ENCODE measurements at regions of chr1 and their contacts with region 1.

Region 1: DNA sequence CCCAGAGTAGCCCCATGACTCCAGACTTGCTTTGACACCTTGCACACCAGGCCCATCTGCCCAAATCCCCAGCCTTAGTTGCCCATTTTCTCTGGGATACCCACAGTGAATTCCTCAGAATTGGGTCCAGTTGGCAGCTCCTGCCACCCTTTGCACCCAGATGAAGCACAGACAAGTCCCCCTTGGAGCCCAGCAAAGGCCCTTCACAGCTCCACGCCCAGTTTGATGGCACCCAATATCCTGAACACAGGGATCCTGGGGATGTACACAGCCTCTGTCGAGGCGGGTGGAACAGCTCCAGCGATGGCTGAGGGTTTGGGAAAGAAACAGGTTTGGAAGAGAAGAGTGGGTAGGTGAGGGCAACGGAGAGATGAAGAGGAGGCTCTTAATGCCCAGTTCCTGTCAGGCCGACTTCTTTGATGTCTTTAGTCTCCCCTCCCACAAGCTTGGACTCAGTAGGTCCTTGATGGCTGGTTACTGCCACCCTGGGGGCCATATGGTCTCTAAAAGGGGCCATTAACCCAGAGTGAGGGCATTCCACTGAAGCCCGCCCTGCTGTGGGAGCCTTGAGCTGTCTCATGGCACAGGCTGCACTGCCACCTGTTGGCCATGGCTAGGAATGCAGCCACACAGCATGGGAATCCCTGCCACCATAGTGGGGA is 21.7 kb downstream of the TMEM53 start:
- DNase-seq: no peak
- ATAC-seq: peak; percentile 98
- H3K4me3 ChIP-seq: no peak overlapping the region
- H3K27ac ChIP-seq: no peak overlapping the region
- H3K4me1 ChIP-seq: no peaks in the 10 kb centered on the region
- H3K27me3 ChIP-seq: no peaks in the 10 kb centered on the region
- CTCF ChIP-seq: peak; percentile 97 to 99 (median 98); a peak in 5 of 6 replicates
- EP300 ChIP-seq: no peak
- POLR2A ChIP-seq: no peak; the same call in 1 of the 2 replicates
- RAD21 ChIP-seq: peak; percentile 90

Region 2: GRCh38 chr1:44377925-44378784 is 274.4 kb before region 1 on chr1:
- CTCF ChIA-PET with region 1: interaction called, 12 read pairs
- POLR2A ChIA-PET with region 1: no interaction called
- RAD21 ChIA-PET with region 1: interaction called, 4 read pairs
- SMC1A ChIA-PET with region 1: interaction called, 14 read pairs
- in situ Hi-C with region 1: no loop called
- intact Hi-C with region 1: loop called (anchors 5 kb)
- DNase-seq: no peak
- ATAC-seq: peak; percentile 76
- H3K4me3 ChIP-seq: no peak overlapping the region
- H3K27ac ChIP-seq: no peak overlapping the region
- H3K4me1 ChIP-seq: no peaks in the 10 kb centered on the region
- H3K27me3 ChIP-seq: no peaks in the 10 kb centered on the region; a peak in 1 of 4 replicates
- CTCF ChIP-seq: peak; percentile 61 to 72 (median 64)
- EP300 ChIP-seq: no peak
- POLR2A ChIP-seq: no peak
- RAD21 ChIP-seq: peak; percentile 74

Region 3: GRCh38 chr1:44594871-44595746 is 57.5 kb before region 1 on chr1:
- CTCF ChIA-PET with region 1: interaction called, 37 read pairs
- POLR2A ChIA-PET with region 1: no interaction called
- RAD21 ChIA-PET with region 1: no interaction called
- SMC1A ChIA-PET with region 1: interaction called, 6 read pairs
- in situ Hi-C with region 1: no loop called
- intact Hi-C with region 1: no loop called
- DNase-seq: no peak
- ATAC-seq: peak; percentile 100
- H3K4me3 ChIP-seq: no peak overlapping the region
- H3K27ac ChIP-seq: no peak overlapping the region
- H3K4me1 ChIP-seq: no peaks in the 10 kb centered on the region
- H3K27me3 ChIP-seq: peaks cover 0 to under 1% of the 10 kb centered on the region in 2 experiments; a peak in 1 of 4 replicates
- CTCF ChIP-seq: peak; percentile 93 to 98 (median 96)
- EP300 ChIP-seq: no peak
- POLR2A ChIP-seq: no peak
- RAD21 ChIP-seq: peak; percentile 86

Region 4: DNA sequence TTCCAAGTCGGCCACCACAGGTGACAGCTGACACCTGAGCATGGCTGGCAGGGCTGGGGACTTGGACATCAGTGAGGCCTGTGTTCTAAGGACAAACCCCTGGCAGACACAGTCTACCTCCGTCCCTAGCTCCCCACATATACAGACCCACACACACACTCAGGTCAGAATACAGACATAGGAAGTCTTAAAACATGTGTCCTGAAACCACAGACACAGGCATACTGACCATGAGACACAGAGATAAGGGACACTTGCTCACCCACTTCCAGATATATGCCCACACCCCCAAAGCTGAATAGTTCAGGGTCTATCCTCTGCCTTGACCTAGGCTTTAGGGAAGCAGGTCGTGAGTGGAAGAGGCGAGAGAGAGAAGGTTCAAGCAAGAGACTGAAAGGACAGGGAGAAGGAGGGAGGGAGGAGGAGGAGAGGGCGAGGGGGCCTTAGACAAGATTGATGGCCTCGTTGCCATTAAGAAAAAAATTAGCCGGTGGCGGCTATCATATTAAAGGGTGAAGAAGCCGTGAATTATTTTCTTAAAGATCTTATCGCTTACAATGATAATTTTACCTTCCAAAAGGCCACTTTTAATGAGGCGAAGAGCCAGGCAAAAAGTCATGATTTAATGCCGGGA is 28.2 kb before region 1 on chr1:
- CTCF ChIA-PET with region 1: interaction called, 22 read pairs
- POLR2A ChIA-PET with region 1: no interaction called
- RAD21 ChIA-PET with region 1: interaction called, 3 read pairs
- SMC1A ChIA-PET with region 1: no interaction called
- in situ Hi-C with region 1: no loop called
- intact Hi-C with region 1: no loop called
- DNase-seq: no peak
- ATAC-seq: no peak; the same call in 2 of the 3 replicates
- H3K4me3 ChIP-seq: no peak overlapping the region
- H3K27ac ChIP-seq: no peak overlapping the region
- H3K4me1 ChIP-seq: no peaks in the 10 kb centered on the region
- H3K27me3 ChIP-seq: no peaks in the 10 kb centered on the region; a peak in 2 of 4 replicates
- CTCF ChIP-seq: no peak
- EP300 ChIP-seq: no peak
- POLR2A ChIP-seq: no peak
- RAD21 ChIP-seq: no peak

Region 5: GRCh38 chr1:44640200-44640853 is 12.2 kb before region 1 on chr1:
- CTCF ChIA-PET with region 1: interaction called, 70 read pairs
- POLR2A ChIA-PET with region 1: interaction called, 4 read pairs
- RAD21 ChIA-PET with region 1: interaction called, 3 read pairs
- SMC1A ChIA-PET with region 1: interaction called, 3 read pairs
- in situ Hi-C with region 1: no loop called
- intact Hi-C with region 1: no loop called
- DNase-seq: no peak
- ATAC-seq: no peak
- H3K4me3 ChIP-seq: no peak overlapping the region
- H3K27ac ChIP-seq: no peak overlapping the region
- H3K4me1 ChIP-seq: no peaks in the 10 kb centered on the region
- H3K27me3 ChIP-seq: no peaks in the 10 kb centered on the region
- CTCF ChIP-seq: no peak
- EP300 ChIP-seq: no peak
- POLR2A ChIP-seq: 0 out of 2 replicates have a peak, but pooled peaks have one; percentile 11
- RAD21 ChIP-seq: no peak

Region 6: GRCh38 chr1:44674113-44675000 is 21.8 kb after region 1 on chr1 and contains the starts of genes ARMH1 and TMEM53:
- CTCF ChIA-PET with region 1: interaction called, 27 read pairs
- POLR2A ChIA-PET with region 1: interaction called, 8 read pairs
- RAD21 ChIA-PET with region 1: interaction called, 14 read pairs
- SMC1A ChIA-PET with region 1: interaction called, 12 read pairs
- in situ Hi-C with region 1: no loop called
- intact Hi-C with region 1: no loop called
- DNase-seq: peak; percentile 95
- ATAC-seq: peak; percentile 94
- H3K4me3 ChIP-seq: peak within 1 kb of the TSS; percentile 82
- H3K27ac ChIP-seq: peak within 1 kb of the TSS; percentile 83
- H3K4me1 ChIP-seq: peaks cover 64% of the 10 kb centered on the region
- H3K27me3 ChIP-seq: no peaks in the 10 kb centered on the region
- CTCF ChIP-seq: 0 out of 6 replicates have a peak, but pooled peaks of 1 of the 3 experiments have one; percentile 15
- EP300 ChIP-seq: no peak
- POLR2A ChIP-seq: peak; percentile 84
- RAD21 ChIP-seq: no peak
- polyA plus RNA-seq, gene ARMH1: 0.93 to 1.8 TPM
- polyA plus RNA-seq, gene TMEM53: 3.1 to 6.2 TPM

Region 7: GRCh38 chr1:44714944-44715571 is 62.5 kb after region 1 on chr1:
- CTCF ChIA-PET with region 1: interaction called, 10 read pairs
- POLR2A ChIA-PET with region 1: no interaction called
- RAD21 ChIA-PET with region 1: interaction called, 5 read pairs
- SMC1A ChIA-PET with region 1: no interaction called
- in situ Hi-C with region 1: no loop called
- intact Hi-C with region 1: no loop called
- DNase-seq: peak; percentile 71
- ATAC-seq: peak; percentile 75
- H3K4me3 ChIP-seq: no peak overlapping the region
- H3K27ac ChIP-seq: peak overlapping the region; percentile 61
- H3K4me1 ChIP-seq: peaks cover 56% of the 10 kb centered on the region
- H3K27me3 ChIP-seq: no peaks in the 10 kb centered on the region
- CTCF ChIP-seq: peak; percentile 89 to 96 (median 90)
- EP300 ChIP-seq: no peak
- POLR2A ChIP-seq: no peak
- RAD21 ChIP-seq: peak; percentile 75

Region 8: GRCh38 chr1:44907893-44908292 is 255.3 kb after region 1 on chr1:
- CTCF ChIA-PET with region 1: no interaction called
- POLR2A ChIA-PET with region 1: no interaction called
- RAD21 ChIA-PET with region 1: no interaction called
- SMC1A ChIA-PET with region 1: no interaction called
- in situ Hi-C with region 1: no loop called
- intact Hi-C with region 1: no loop called
- DNase-seq: no peak
- ATAC-seq: no peak
- H3K4me3 ChIP-seq: no peak overlapping the region
- H3K27ac ChIP-seq: no peak overlapping the region
- H3K4me1 ChIP-seq: no peaks in the 10 kb centered on the region
- H3K27me3 ChIP-seq: no peaks in the 10 kb centered on the region
- CTCF ChIP-seq: no peak
- EP300 ChIP-seq: no peak
- POLR2A ChIP-seq: no peak
- RAD21 ChIP-seq: no peak